ENCODE measurements at regions of chr20 and their contacts with region 1.

Region 1: GRCh38 chr20:9407805-9408421 is 106.5 kb upstream of the LAMP5 start:
- DNase-seq: peak; percentile 79
- H3K4me3 ChIP-seq: no peak overlapping the region
- H3K27ac ChIP-seq: no peak overlapping the region
- H3K4me1 ChIP-seq: peaks cover 2% of the 10 kb centered on the region
- H3K27me3 ChIP-seq: no peaks in the 10 kb centered on the region
- CTCF ChIP-seq: peak; percentile 69 to 73
- POLR2A ChIP-seq: no peak

Region 2: DNA sequence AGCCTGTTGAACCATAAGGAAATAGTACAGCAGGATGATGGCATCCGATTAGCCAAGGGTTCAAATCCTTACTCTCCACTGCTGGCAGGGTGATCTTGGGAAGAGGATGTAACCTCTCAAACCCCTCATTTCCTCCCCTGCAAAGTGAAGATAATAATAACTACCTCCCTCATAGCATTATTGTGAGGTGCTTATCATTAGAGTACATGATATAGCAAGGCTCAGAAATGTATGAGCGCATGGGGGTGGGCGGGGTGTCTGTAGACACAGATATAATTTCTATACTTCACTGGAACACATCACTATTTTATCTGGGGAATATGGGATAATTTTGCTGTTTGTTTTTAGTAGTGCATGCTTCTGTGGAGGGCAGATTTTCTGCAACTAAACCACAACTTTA is 16.6 kb after region 1 on chr20:
- CTCF ChIA-PET with region 1: interaction called, 46 read pairs
- POLR2A ChIA-PET with region 1: no interaction called
- dilution Hi-C with region 1: no loop called
- intact Hi-C with region 1: no loop called
- DNase-seq: no peak
- H3K4me3 ChIP-seq: no peak overlapping the region
- H3K27ac ChIP-seq: no peak overlapping the region
- H3K4me1 ChIP-seq: no peaks in the 10 kb centered on the region
- H3K27me3 ChIP-seq: no peaks in the 10 kb centered on the region
- CTCF ChIP-seq: no peak
- POLR2A ChIP-seq: no peak

Region 3: GRCh38 chr20:9485614-9486340 is 77.9 kb after region 1 on chr20:
- CTCF ChIA-PET with region 1: interaction called, 12 read pairs
- POLR2A ChIA-PET with region 1: no interaction called
- dilution Hi-C with region 1: no loop called
- intact Hi-C with region 1: no loop called
- DNase-seq: no peak
- H3K4me3 ChIP-seq: no peak overlapping the region
- H3K27ac ChIP-seq: no peak overlapping the region
- H3K4me1 ChIP-seq: no peaks in the 10 kb centered on the region
- H3K27me3 ChIP-seq: no peaks in the 10 kb centered on the region
- CTCF ChIP-seq: no peak
- POLR2A ChIP-seq: no peak

Region 4: DNA sequence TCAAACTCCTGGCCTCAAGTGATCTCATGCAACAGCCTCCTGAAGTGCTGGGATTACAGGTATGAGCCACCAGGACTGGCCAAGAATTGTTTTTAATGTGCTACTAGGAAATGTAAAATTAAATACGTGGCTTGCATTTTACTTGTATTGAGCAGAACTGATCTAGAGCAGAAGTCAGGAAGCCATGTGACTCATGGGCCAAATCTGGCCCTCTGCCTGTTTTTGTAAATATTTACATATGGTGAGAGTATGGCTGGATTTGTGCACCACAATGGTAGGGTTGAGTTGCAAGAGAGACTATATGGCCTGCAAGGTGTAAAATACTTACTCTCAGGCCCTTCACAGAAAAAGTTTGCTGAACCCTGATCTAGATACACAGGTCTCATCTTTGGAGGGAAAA is 182.3 kb after region 1 on chr20:
- CTCF ChIA-PET with region 1: interaction called, 21 read pairs
- POLR2A ChIA-PET with region 1: no interaction called
- dilution Hi-C with region 1: no loop called
- intact Hi-C with region 1: no loop called
- DNase-seq: peak; percentile 60
- H3K4me3 ChIP-seq: no peak overlapping the region
- H3K27ac ChIP-seq: no peak overlapping the region
- H3K4me1 ChIP-seq: peaks cover 22% of the 10 kb centered on the region
- H3K27me3 ChIP-seq: no peaks in the 10 kb centered on the region
- CTCF ChIP-seq: no peak
- POLR2A ChIP-seq: no peak

Region 5: DNA sequence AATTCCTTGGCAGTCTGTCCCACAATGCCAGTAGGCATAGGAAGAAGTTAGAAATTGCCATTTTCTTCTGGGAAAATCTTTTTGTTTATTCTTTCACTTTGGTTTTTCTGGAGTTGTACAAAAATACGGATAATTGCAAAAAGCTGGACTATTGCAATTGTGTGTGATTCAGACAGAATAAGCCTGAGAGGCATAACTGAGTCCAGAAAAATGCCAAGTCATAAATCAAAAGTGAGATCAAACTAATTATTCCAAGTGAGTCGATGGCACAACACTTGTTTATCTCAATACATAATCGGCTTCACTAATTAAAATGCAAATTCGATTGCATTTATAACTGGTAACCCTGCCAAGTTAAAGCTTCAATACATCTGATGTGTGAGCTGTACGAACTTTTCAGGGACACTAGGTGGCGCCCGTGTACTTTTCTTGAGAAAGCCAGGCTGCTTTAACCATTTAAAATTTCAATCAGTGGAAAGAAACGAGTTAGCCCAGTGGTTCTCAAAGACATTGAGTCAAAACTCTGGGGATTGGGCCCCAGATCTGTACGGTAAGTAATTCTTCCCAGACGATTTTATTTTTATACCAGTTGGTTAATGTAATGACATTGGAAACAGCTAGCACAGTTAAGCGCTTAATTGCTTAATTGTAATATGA is 209.0 kb after region 1 on chr20:
- CTCF ChIA-PET with region 1: interaction called, 776 read pairs
- POLR2A ChIA-PET with region 1: no interaction called
- dilution Hi-C with region 1: no loop called
- intact Hi-C with region 1: no loop called
- DNase-seq: peak; percentile 62
- H3K4me3 ChIP-seq: no peak overlapping the region
- H3K27ac ChIP-seq: no peak overlapping the region
- H3K4me1 ChIP-seq: no peaks in the 10 kb centered on the region
- H3K27me3 ChIP-seq: peaks cover 7 to 8% of the 10 kb centered on the region in 2 experiments
- CTCF ChIP-seq: peak; percentile 69 to 70
- POLR2A ChIP-seq: no peak

Region 6: DNA sequence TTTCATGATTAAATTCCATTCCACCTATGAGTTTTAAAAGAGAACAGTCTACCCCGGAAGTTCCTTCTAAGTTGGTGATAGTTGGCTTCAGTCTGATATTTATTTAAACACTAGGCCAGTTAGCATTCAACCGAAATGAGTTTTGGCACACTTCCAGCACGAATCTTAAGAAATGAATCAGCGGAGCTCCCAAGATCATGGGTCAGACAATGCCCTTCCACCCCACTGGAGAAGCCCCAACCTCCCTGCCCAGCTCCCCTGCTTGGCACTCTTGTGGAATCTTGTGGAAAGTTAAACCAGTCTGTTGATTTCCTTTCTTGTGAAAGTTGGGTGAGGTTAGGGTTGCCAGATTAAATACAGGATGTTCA is 961.8 kb after region 1 on chr20:
- CTCF ChIA-PET with region 1: no interaction called
- POLR2A ChIA-PET with region 1: no interaction called
- dilution Hi-C with region 1: no loop called
- intact Hi-C with region 1: no loop called
- DNase-seq: peak; percentile 80
- H3K4me3 ChIP-seq: no peak overlapping the region
- H3K27ac ChIP-seq: peak overlapping the region; percentile 48
- H3K4me1 ChIP-seq: peaks cover 21% of the 10 kb centered on the region
- H3K27me3 ChIP-seq: no peaks in the 10 kb centered on the region
- CTCF ChIP-seq: no peak
- POLR2A ChIP-seq: no peak

Measured in endothelial cell of umbilical vein (primary cell).